CD8-positive, alpha-beta T cell (primary cell): ENCODE measurements at regions of chr10 and their contacts with region 1.

Region 1: DNA sequence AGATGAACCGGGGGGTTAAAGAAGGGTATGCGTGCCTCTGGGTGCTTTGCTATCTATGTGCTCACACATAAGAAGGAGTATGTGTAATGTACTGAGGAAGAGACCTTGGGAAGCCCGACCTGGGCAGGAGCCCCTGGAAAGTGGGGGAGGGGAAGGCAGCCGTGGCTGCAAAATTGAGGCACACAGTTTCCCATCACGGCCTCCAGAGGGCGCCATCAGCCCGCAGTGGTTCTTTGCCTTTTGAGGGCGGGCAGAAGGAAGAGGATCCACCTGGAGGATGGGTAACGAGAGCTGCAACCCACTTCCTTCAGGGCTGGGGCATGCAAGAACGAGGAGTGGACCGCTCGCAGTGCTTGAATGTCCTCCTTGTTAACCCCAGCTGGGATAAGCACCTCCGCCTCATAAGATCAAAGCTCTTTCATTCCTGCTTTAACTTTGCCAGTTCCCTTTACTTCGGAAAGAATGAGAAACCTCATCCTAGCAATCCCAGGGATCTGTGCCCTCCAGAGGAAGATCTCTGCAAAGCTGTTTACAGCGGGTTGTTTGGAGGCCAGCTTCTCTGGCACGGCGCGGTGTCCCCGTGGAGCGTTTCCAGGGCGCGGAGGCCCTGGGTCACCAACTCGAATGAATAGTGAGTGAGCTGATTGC is 77.9 kb downstream of the PCGF5 start:
- DNase-seq: peak; percentile 47 to 88 (median 79)
- ATAC-seq: peak; percentile 97
- H3K4me3 ChIP-seq: peak overlapping the region; percentile 23 to 59
- H3K4me3 Mint-ChIP-seq: peak overlapping the region; percentile 73
- H3K27ac ChIP-seq: no peak overlapping the region
- H3K27ac Mint-ChIP-seq: no peak overlapping the region
- H3K4me1 ChIP-seq: peaks cover 4% of the 10 kb centered on the region
- H3K4me1 Mint-ChIP-seq: peaks cover 10% of the 10 kb centered on the region
- H3K27me3 ChIP-seq: no peaks in the 10 kb centered on the region
- H3K27me3 Mint-ChIP-seq: peaks cover 9% of the 10 kb centered on the region
- CTCF ChIP-seq: peak; percentile 92

Region 2: DNA sequence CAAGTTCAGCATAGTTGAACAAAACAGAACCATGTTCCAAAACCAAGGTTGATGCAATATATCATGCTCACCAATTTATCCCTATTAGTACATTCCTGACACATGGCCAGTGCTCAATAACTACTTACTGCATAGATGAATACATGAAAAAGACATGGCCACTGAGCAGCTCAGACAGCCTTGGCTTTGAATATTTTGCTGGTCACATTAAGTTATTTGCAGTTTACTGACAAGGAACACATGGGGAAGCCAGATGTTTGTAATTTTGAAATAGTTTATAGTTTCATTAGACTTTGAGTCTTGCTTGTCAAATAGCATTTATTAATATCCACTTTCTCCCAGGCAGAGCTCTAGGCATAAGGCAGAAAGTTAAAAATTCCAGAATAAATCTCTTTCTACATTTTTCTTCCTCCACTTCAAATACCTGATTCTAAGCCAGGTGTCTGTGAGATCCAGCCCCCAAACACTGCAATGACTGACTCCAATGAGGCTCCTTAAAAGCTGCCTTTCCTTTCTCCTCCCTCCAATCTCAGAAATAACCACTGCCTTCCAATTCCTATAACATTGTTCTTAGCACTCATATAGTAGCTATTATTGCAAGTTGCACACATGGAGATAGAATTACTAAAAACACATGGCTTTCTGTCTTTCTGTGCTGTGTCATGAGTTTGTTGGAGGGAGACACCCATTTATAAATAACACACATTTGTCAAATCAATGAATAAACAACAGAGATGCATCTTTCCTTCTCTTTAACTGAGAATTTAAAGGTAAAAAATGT is 13.4 kb after region 1 on chr10:
- CTCF ChIA-PET with region 1: interaction called, 19 read pairs
- POLR2A ChIA-PET with region 1: no interaction called
- intact Hi-C with region 1: no loop called
- DNase-seq: no peak
- ATAC-seq: no peak
- H3K4me3 ChIP-seq: no peak overlapping the region
- H3K4me3 Mint-ChIP-seq: no peak overlapping the region
- H3K27ac ChIP-seq: no peak overlapping the region
- H3K27ac Mint-ChIP-seq: no peak overlapping the region
- H3K4me1 ChIP-seq: no peaks in the 10 kb centered on the region
- H3K4me1 Mint-ChIP-seq: no peaks in the 10 kb centered on the region
- H3K27me3 ChIP-seq: no peaks in the 10 kb centered on the region
- H3K27me3 Mint-ChIP-seq: peaks cover 9% of the 10 kb centered on the region
- CTCF ChIP-seq: no peak

Region 3: GRCh38 chr10:91389636-91390512 is 91.5 kb after region 1 on chr10:
- CTCF ChIA-PET with region 1: interaction called, 18 read pairs
- POLR2A ChIA-PET with region 1: no interaction called
- intact Hi-C with region 1: loop called in 1 of 2 experiments (anchors 5 kb)
- DNase-seq: peak in 3 of 9 experiments; percentile 27 to 84 (median 77)
- ATAC-seq: peak; percentile 99
- H3K4me3 ChIP-seq: no peak overlapping the region
- H3K4me3 Mint-ChIP-seq: peak overlapping the region; percentile 42
- H3K27ac ChIP-seq: no peak overlapping the region
- H3K27ac Mint-ChIP-seq: no peak overlapping the region
- H3K4me1 ChIP-seq: peaks cover 4% of the 10 kb centered on the region
- H3K4me1 Mint-ChIP-seq: peaks cover 8% of the 10 kb centered on the region
- H3K27me3 ChIP-seq: no peaks in the 10 kb centered on the region
- H3K27me3 Mint-ChIP-seq: peaks cover 14% of the 10 kb centered on the region
- CTCF ChIP-seq: peak; percentile 75

Region 4: GRCh38 chr10:91551856-91552255 is 253.5 kb after region 1 on chr10:
- CTCF ChIA-PET with region 1: no interaction called
- POLR2A ChIA-PET with region 1: no interaction called
- intact Hi-C with region 1: loop called in 1 of 2 experiments (anchors 5 kb)
- DNase-seq: peak in 2 of 9 experiments; percentile 5 to 9
- ATAC-seq: no peak
- H3K4me3 ChIP-seq: no peak overlapping the region
- H3K4me3 Mint-ChIP-seq: no peak overlapping the region
- H3K27ac ChIP-seq: no peak overlapping the region
- H3K27ac Mint-ChIP-seq: no peak overlapping the region
- H3K4me1 ChIP-seq: no peaks in the 10 kb centered on the region
- H3K4me1 Mint-ChIP-seq: no peaks in the 10 kb centered on the region
- H3K27me3 ChIP-seq: no peaks in the 10 kb centered on the region
- H3K27me3 Mint-ChIP-seq: no peaks in the 10 kb centered on the region
- CTCF ChIP-seq: no peak

Region 5: GRCh38 chr10:91672021-91672608 is 373.8 kb after region 1 on chr10:
- CTCF ChIA-PET with region 1: no interaction called
- POLR2A ChIA-PET with region 1: no interaction called
- intact Hi-C with region 1: no loop called
- DNase-seq: no peak
- ATAC-seq: no peak
- H3K4me3 ChIP-seq: no peak overlapping the region
- H3K4me3 Mint-ChIP-seq: no peak overlapping the region
- H3K27ac ChIP-seq: no peak overlapping the region
- H3K27ac Mint-ChIP-seq: no peak overlapping the region
- H3K4me1 ChIP-seq: no peaks in the 10 kb centered on the region
- H3K4me1 Mint-ChIP-seq: no peaks in the 10 kb centered on the region
- H3K27me3 ChIP-seq: no peaks in the 10 kb centered on the region
- H3K27me3 Mint-ChIP-seq: peaks cover 11% of the 10 kb centered on the region
- CTCF ChIP-seq: no peak

Region 6: DNA sequence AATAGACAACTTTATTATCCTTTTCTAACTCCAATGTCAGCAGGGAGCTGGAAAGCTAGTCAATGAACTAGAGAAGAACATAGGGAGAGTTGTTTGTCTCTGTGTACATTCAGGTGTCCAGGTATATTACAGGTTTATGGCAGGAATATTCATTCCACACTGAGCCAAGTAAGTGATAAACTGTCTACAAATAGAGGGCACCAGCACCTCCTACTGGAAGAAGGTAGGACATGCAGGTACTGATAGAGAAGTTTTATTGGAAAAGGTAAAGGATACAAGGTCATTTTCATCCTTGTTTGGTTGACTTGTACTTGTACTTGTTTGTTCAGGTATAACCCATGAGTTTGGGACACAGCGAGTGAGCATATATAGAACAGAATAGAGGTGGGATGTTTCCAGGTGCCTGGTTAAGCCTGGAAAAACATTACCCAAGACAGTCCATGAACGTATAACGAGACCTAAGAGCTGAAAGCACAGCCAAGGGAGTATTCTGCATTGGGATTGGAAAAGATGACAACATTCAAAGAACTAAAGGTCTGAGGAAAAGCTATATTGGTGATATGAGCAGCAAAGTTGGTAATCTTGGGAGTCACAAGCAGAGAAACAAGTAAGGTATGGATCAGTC is 395.9 kb after region 1 on chr10:
- CTCF ChIA-PET with region 1: interaction called, 15 read pairs
- POLR2A ChIA-PET with region 1: no interaction called
- intact Hi-C with region 1: loop called (anchors 2 kb)
- DNase-seq: peak in 2 of 9 experiments; percentile 33 to 42
- ATAC-seq: no peak
- H3K4me3 ChIP-seq: no peak overlapping the region
- H3K4me3 Mint-ChIP-seq: no peak overlapping the region
- H3K27ac ChIP-seq: no peak overlapping the region
- H3K27ac Mint-ChIP-seq: no peak overlapping the region
- H3K4me1 ChIP-seq: no peaks in the 10 kb centered on the region
- H3K4me1 Mint-ChIP-seq: no peaks in the 10 kb centered on the region
- H3K27me3 ChIP-seq: no peaks in the 10 kb centered on the region
- H3K27me3 Mint-ChIP-seq: peaks cover 8% of the 10 kb centered on the region
- CTCF ChIP-seq: peak; percentile 69

Region 7: DNA sequence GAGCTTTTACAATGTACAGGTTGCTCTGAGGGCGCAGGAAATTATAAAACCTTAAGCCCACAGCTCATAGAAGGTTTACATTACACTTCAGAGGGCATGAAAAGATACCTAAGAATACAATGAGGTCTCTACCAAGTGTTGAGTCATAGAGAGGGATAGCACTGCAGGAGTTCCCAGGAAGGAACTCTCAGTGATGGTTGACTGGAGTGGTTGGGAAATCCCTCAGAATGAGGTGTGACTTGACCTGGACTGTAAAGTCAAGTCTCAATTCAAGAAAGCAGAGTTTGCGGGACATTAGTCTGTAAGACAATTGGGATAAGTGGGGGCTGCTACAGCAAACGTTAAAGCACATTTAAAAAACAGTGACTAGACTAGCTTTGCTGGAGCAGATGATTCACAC is 521.8 kb after region 1 on chr10:
- CTCF ChIA-PET with region 1: no interaction called
- POLR2A ChIA-PET with region 1: no interaction called
- intact Hi-C with region 1: loop called in 1 of 2 experiments (anchors 10 kb)
- DNase-seq: no peak
- ATAC-seq: no peak
- H3K4me3 ChIP-seq: no peak overlapping the region
- H3K4me3 Mint-ChIP-seq: no peak overlapping the region
- H3K27ac ChIP-seq: no peak overlapping the region
- H3K27ac Mint-ChIP-seq: no peak overlapping the region
- H3K4me1 ChIP-seq: no peaks in the 10 kb centered on the region
- H3K4me1 Mint-ChIP-seq: peaks cover 7% of the 10 kb centered on the region
- H3K27me3 ChIP-seq: no peaks in the 10 kb centered on the region
- H3K27me3 Mint-ChIP-seq: no peaks in the 10 kb centered on the region
- CTCF ChIP-seq: no peak